Kidney (tissue), 22 donors: ENCODE measurements at regions of chr3 and their contacts with region 1.

Region 1: GRCh38 chr3:143951351-143951971 is 20.2 kb upstream of the DIPK2A start:
- DNase-seq: peak in 2 of 5 donors; percentile 5 to 31
- H3K4me3 ChIP-seq: no peak overlapping the region
- H3K27ac ChIP-seq: no peak overlapping the region
- H3K4me1 ChIP-seq: no peaks in the 10 kb centered on the region
- H3K27me3 ChIP-seq: no peaks in the 10 kb centered on the region
- CTCF ChIP-seq: peak; percentile 56

Region 2: GRCh38 chr3:143751643-143752178 is 199.8 kb before region 1 on chr3:
- intact Hi-C with region 1: no loop called
- DNase-seq: no peak
- H3K4me3 ChIP-seq: no peak overlapping the region
- H3K27ac ChIP-seq: no peak overlapping the region
- H3K4me1 ChIP-seq: no peaks in the 10 kb centered on the region
- H3K27me3 ChIP-seq: no peaks in the 10 kb centered on the region
- CTCF ChIP-seq: no peak

Region 3: DNA sequence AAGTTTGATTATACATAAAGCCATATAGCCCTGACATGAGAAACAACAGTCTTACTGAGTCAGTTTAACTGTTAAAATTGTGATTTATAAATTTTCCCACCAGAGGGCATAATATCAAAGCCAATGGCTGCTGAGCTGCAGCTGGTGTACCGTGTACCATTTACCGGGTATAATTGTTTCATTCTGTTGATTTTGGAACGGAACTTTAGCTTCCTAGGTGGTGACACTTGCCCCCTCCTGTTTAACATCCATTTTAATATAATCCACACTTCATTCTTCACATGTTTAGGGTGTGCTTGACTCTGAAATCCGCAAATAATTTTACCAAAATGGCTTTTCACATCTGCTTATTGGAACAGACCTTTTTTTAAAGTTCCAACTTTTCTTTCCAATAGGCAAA is 176.0 kb before region 1 on chr3:
- intact Hi-C with region 1: loop called (anchors 10 kb)
- DNase-seq: peak in 2 of 5 donors; percentile 58 to 67
- H3K4me3 ChIP-seq: no peak overlapping the region
- H3K27ac ChIP-seq: no peak overlapping the region
- H3K4me1 ChIP-seq: no peaks in the 10 kb centered on the region
- H3K27me3 ChIP-seq: no peaks in the 10 kb centered on the region
- CTCF ChIP-seq: peak; percentile 32